ENCODE measurements at regions of chr2 and their contacts with region 1.

Region 1: GRCh38 chr2:218406209-218406948 is 6.7 kb downstream of the CTDSP1 start:
- DNase-seq: peak; percentile 94
- H3K4me3 Mint-ChIP-seq: peak overlapping the region; percentile 67
- H3K27ac Mint-ChIP-seq: peak overlapping the region; percentile 82
- H3K4me1 Mint-ChIP-seq: peaks cover 17% of the 10 kb centered on the region
- H3K27me3 Mint-ChIP-seq: no peaks in the 10 kb centered on the region
- CTCF ChIP-seq: peak; percentile 82

Region 2: DNA sequence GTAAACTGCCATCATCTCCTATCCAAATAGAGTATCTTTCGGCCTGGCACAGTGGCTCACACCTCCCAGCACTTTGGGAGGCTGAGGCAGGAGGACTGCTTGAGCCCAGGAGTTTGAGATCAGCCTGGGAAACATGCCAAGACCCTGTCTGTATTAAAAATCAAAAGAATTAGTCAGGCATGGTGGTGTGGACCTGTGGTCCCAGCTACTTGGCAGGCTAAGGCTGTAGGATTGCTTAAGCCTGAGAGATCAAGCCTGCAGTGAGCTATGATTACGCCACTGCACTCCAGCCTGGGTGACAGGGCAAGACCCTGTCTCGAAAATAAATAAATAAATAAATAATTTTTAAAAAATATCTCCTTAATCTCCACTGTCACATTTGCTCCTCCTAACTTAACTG is 204.1 kb before region 1 on chr2:
- CTCF ChIA-PET with region 1: no interaction called
- POLR2A ChIA-PET with region 1: no interaction called
- intact Hi-C with region 1: no loop called
- DNase-seq: peak; percentile 28
- H3K4me3 Mint-ChIP-seq: no peak overlapping the region
- H3K27ac Mint-ChIP-seq: no peak overlapping the region
- H3K4me1 Mint-ChIP-seq: no peaks in the 10 kb centered on the region
- H3K27me3 Mint-ChIP-seq: peaks cover 35% of the 10 kb centered on the region
- CTCF ChIP-seq: no peak

Region 3: GRCh38 chr2:218286570-218287459 is 119.6 kb before region 1 on chr2:
- CTCF ChIA-PET with region 1: interaction called, 4 read pairs
- POLR2A ChIA-PET with region 1: interaction called, 26 read pairs
- intact Hi-C with region 1: no loop called
- DNase-seq: peak; percentile 97
- H3K4me3 Mint-ChIP-seq: peak overlapping the region; percentile 80
- H3K27ac Mint-ChIP-seq: peak overlapping the region; percentile 99
- H3K4me1 Mint-ChIP-seq: peaks cover 57% of the 10 kb centered on the region
- H3K27me3 Mint-ChIP-seq: no peaks in the 10 kb centered on the region
- CTCF ChIP-seq: no peak

Region 4: GRCh38 chr2:218418717-218419458 is 12.5 kb after region 1 on chr2 and contains the start of gene VIL1:
- CTCF ChIA-PET with region 1: no interaction called
- POLR2A ChIA-PET with region 1: no interaction called
- intact Hi-C with region 1: no loop called
- DNase-seq: no peak
- H3K4me3 Mint-ChIP-seq: no peak within 1 kb of the TSS
- H3K27ac Mint-ChIP-seq: no peak within 1 kb of the TSS
- H3K4me1 Mint-ChIP-seq: no peaks in the 10 kb centered on the region
- H3K27me3 Mint-ChIP-seq: no peaks in the 10 kb centered on the region
- CTCF ChIP-seq: no peak
- total RNA-seq, gene VIL1: not detected in 2 replicates

Region 5: GRCh38 chr2:218448934-218449333 is 42.6 kb after region 1 on chr2:
- CTCF ChIA-PET with region 1: interaction called, 4 read pairs
- POLR2A ChIA-PET with region 1: no interaction called
- intact Hi-C with region 1: loop called (anchors 5 kb)
- DNase-seq: peak; percentile 69
- H3K4me3 Mint-ChIP-seq: no peak overlapping the region
- H3K27ac Mint-ChIP-seq: no peak overlapping the region
- H3K4me1 Mint-ChIP-seq: peaks cover 6% of the 10 kb centered on the region
- H3K27me3 Mint-ChIP-seq: no peaks in the 10 kb centered on the region
- CTCF ChIP-seq: no peak

Region 6: DNA sequence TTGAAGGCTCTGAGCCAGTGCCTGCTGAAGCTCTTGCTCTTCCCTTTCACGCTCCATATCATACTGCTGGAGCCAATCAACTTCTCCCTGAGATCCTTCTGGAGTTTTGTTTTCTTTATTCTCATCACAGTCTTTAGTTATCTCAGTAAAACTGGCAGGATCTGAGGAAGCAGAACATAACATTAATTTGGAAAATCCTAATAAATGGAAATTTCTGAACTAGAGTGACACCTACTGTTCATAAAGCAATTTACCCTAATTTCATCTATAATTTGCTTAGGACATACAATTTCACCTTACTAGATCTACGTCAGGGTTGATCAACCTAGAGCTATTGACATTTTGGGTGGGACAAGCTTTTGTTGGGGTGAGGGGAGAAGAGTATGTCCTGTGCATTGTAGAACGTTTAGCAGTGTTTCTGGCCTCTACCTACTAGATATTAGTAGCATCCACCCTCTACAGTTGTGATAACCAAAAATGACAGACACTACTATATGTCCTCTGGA is 59.7 kb after region 1 on chr2:
- CTCF ChIA-PET with region 1: interaction called, 12 read pairs
- POLR2A ChIA-PET with region 1: interaction called, 3 read pairs
- intact Hi-C with region 1: loop called (anchors 1 kb)
- DNase-seq: peak; percentile 27
- H3K4me3 Mint-ChIP-seq: no peak overlapping the region
- H3K27ac Mint-ChIP-seq: no peak overlapping the region
- H3K4me1 Mint-ChIP-seq: no peaks in the 10 kb centered on the region
- H3K27me3 Mint-ChIP-seq: no peaks in the 10 kb centered on the region
- CTCF ChIP-seq: peak; percentile 41

Region 7: DNA sequence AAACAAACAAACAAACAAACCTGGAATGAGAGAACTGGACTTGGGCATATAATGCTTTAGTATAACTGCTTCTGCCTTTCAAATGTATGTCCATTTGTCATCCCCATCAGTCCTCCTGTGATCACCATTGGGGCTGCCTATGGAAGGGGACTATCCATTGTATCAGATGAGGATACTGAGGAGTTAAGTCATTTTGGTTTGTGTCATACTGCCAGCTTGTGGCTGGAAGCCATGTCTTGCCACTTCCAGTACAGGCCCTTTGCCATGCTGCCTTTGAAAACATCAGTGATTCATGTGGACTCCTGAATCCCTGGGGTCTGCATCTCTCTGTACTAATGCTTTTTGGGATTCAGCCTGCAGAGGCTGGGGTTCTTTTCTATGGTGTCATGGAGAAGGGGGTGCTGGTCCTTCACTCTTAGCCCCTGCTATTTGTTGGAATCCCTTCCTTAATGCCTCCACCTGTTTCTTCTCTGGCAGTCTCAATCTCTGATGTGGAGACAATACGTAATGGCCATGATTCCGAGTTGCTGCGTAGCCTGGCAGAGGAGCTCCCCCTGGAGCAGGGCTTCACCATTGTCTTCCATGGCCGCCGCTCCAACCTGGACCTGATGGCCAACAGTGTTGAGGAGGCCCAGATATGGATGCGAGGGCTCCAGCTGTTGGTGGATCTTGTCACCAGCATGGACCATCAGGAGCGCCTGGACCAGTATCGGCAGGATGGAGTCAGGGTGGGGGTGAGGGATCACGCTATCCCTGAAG is 211.9 kb after region 1 on chr2:
- CTCF ChIA-PET with region 1: no interaction called
- POLR2A ChIA-PET with region 1: no interaction called
- intact Hi-C with region 1: loop called (anchors 1 kb)
- DNase-seq: peak; percentile 31
- H3K4me3 Mint-ChIP-seq: no peak overlapping the region
- H3K27ac Mint-ChIP-seq: no peak overlapping the region
- H3K4me1 Mint-ChIP-seq: no peaks in the 10 kb centered on the region
- H3K27me3 Mint-ChIP-seq: no peaks in the 10 kb centered on the region
- CTCF ChIP-seq: no peak

Region 8: GRCh38 chr2:218648088-218648786 is 241.9 kb after region 1 on chr2:
- CTCF ChIA-PET with region 1: no interaction called
- POLR2A ChIA-PET with region 1: no interaction called
- intact Hi-C with region 1: loop called (anchors 2 kb)
- DNase-seq: peak; percentile 68
- H3K4me3 Mint-ChIP-seq: no peak overlapping the region
- H3K27ac Mint-ChIP-seq: no peak overlapping the region
- H3K4me1 Mint-ChIP-seq: no peaks in the 10 kb centered on the region
- H3K27me3 Mint-ChIP-seq: no peaks in the 10 kb centered on the region
- CTCF ChIP-seq: peak; percentile 67

Measured in MCF 10A (cell line).